Activated CD8-positive, alpha-beta T cell treated with anti-CD3 and anti-CD28 coated beads, Interleukin-2, amount 10 ng/mL, durations not matched to agents 7 days and 5 days (primary cell): ENCODE measurements at regions of chr12 and their contacts with region 1.

Region 1: DNA sequence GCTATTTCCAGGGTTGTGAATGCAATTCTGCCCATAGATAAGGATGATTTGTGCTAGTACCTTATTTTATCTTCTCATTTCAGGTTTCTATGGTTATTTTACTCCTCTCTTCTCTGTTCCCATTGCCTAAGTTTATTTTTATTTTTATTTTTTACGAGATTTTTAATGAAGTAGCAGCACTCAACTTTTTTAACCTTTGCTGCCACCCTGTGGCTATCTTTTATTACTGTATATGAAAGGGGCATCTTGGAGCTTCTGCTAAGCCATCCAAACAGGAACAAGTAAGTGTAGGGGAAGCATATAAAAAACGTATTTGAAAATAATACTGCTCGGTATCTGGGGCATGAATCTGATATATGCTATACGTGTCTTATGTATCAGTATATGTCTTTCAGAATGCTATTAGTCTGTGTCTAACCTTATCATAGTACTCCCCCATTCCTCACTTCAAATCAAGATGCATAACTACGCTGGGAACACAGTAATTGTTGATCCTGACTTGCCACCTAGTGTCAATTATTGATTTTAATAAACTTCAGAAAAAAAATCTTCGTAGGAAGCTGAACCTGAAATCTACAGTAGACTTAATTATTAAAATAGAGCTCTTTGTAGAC is 60.3 kb downstream of the KLRG1 start:
- DNase-seq: peak; percentile 56
- ATAC-seq: peak; percentile 72
- H3K4me3 Mint-ChIP-seq: no peak overlapping the region
- H3K27ac Mint-ChIP-seq: no peak overlapping the region
- H3K4me1 Mint-ChIP-seq: peaks cover 14% of the 10 kb centered on the region
- H3K27me3 Mint-ChIP-seq: no peaks in the 10 kb centered on the region

Region 2: DNA sequence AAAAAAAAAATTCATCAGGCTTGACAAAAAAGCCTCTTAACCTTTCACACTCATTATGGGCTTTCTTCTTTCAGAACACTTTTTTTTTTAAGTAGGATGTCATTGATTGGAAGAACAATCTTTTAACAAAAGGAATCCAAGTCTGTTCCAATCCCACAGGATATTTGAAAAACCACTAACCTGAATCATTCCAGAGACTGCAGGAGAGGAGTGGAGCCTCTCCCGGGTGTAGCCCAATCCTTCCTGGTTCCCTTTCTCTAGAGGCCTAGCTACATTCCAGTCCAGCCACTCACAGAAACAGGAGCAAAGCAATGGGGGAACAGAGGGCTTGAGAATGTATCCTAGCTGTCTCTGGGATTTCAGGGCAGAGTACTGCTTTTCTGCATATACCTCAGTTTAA is 391.3 kb before region 1 on chr12:
- CTCF ChIA-PET with region 1: interaction called, 25 read pairs
- POLR2A ChIA-PET with region 1: no interaction called
- DNase-seq: no peak
- ATAC-seq: no peak
- H3K4me3 Mint-ChIP-seq: no peak overlapping the region
- H3K27ac Mint-ChIP-seq: no peak overlapping the region
- H3K4me1 Mint-ChIP-seq: no peaks in the 10 kb centered on the region
- H3K27me3 Mint-ChIP-seq: peaks cover 12% of the 10 kb centered on the region

Region 3: GRCh38 chr12:8701046-8701660 is 348.5 kb before region 1 on chr12:
- CTCF ChIA-PET with region 1: interaction called, 12 read pairs
- POLR2A ChIA-PET with region 1: no interaction called
- DNase-seq: no peak
- ATAC-seq: no peak
- H3K4me3 Mint-ChIP-seq: no peak overlapping the region
- H3K27ac Mint-ChIP-seq: no peak overlapping the region
- H3K4me1 Mint-ChIP-seq: peaks cover 20% of the 10 kb centered on the region
- H3K27me3 Mint-ChIP-seq: peaks cover 20% of the 10 kb centered on the region

Region 4: DNA sequence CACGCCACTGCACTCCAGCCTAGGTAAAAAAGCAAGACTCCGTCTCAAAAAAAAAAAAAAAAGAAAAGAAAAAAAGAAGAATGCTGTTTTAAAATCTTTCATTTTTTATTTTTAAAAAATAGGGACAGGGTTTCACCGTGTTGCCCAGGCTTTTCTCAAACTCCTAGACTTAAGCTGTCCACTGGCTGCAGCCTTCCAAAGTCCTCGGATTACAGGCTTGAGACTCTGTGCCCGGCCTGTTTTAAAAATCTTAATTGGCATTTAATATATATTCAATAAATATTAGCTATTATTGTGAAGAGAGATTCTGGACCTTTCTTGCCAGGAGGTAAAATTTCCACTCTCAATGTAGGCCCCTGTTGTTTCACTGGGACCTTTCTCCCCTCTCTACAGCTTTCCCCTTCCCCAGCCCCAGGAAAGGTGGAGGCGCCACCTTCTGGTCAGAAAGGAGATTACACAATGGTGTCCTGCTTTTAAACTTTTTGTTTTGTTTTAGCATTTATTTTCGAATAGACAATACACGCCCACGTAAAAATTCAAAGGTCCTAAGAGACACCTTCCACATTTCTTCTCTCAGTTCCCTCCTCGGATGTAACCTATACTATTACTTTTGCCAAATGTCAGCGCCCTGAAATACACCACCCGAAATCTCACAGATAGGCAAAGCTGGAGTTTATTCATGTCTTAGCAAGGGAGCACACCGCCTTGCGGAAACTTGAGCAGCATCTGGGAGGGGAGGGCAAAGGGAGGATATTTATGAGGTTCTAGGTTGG is 159.1 kb before region 1 on chr12:
- CTCF ChIA-PET with region 1: interaction called, 35 read pairs
- POLR2A ChIA-PET with region 1: interaction called, 4 read pairs
- DNase-seq: peak; percentile 63
- ATAC-seq: peak; percentile 69
- H3K4me3 Mint-ChIP-seq: peak overlapping the region; percentile 80
- H3K27ac Mint-ChIP-seq: no peak overlapping the region
- H3K4me1 Mint-ChIP-seq: peaks cover 5% of the 10 kb centered on the region
- H3K27me3 Mint-ChIP-seq: peaks cover 13% of the 10 kb centered on the region

Region 5: GRCh38 chr12:8943565-8944186 is 106.0 kb before region 1 on chr12:
- CTCF ChIA-PET with region 1: interaction called, 153 read pairs
- POLR2A ChIA-PET with region 1: interaction called, 10 read pairs
- DNase-seq: no peak
- ATAC-seq: no peak
- H3K4me3 Mint-ChIP-seq: no peak overlapping the region
- H3K27ac Mint-ChIP-seq: no peak overlapping the region
- H3K4me1 Mint-ChIP-seq: peaks cover 21% of the 10 kb centered on the region
- H3K27me3 Mint-ChIP-seq: no peaks in the 10 kb centered on the region

Region 6: DNA sequence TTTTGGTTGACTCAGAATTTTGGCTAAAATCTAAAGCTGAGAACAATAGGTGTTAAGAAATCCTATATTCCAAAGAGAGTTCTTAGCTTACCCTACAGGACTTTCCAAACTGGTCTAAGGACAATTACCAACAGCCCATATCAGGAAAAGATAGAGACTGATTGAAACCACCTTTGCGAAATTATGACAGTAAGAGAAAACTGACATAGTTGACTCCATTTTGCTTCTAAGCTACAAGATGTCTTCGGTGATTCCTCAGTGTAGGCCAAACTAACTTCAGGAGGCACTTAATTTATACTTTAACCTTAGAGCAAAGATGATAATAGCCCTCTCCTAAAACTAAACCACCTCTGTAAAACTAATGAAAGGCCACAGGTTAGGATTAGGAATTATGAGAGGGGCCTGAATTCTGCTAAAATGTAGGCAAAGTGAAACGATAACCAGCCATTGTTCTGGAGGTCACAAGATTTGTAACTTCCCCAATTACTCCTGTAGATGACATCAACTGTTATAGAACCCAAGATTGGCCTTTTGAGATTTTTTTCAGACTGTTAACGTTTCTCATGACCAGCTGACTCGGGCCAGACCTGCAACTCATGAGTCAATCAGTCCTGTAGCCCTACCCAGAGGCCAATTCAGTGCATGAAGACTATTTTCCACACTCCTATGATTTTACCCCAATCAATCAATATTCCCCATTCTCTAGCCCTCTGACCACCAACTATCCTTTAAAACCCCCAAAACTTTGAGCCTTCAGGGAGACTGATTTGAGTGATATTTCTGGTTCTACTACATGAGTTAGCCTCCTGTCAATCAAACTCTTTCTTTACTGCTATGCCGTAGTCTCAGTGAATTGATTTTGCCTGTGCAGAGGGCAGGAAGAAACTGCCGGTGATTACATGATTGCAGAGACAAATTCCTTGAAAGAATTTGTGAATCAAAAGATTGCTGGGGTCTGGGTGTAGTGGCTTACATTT is 17.1 kb before region 1 on chr12:
- CTCF ChIA-PET with region 1: interaction called, 58 read pairs
- POLR2A ChIA-PET with region 1: no interaction called
- DNase-seq: no peak
- ATAC-seq: no peak
- H3K4me3 Mint-ChIP-seq: no peak overlapping the region
- H3K27ac Mint-ChIP-seq: no peak overlapping the region
- H3K4me1 Mint-ChIP-seq: peaks cover 19% of the 10 kb centered on the region
- H3K27me3 Mint-ChIP-seq: no peaks in the 10 kb centered on the region

Region 7: GRCh38 chr12:9064201-9064814 is 14.7 kb after region 1 on chr12:
- CTCF ChIA-PET with region 1: interaction called, 14 read pairs
- POLR2A ChIA-PET with region 1: no interaction called
- DNase-seq: peak; percentile 71
- ATAC-seq: peak; percentile 93
- H3K4me3 Mint-ChIP-seq: peak overlapping the region; percentile 71
- H3K27ac Mint-ChIP-seq: no peak overlapping the region
- H3K4me1 Mint-ChIP-seq: peaks cover 3% of the 10 kb centered on the region
- H3K27me3 Mint-ChIP-seq: peaks cover 27% of the 10 kb centered on the region